ENCODE measurements at regions of chr9 and their contacts with region 1.

Region 1: DNA sequence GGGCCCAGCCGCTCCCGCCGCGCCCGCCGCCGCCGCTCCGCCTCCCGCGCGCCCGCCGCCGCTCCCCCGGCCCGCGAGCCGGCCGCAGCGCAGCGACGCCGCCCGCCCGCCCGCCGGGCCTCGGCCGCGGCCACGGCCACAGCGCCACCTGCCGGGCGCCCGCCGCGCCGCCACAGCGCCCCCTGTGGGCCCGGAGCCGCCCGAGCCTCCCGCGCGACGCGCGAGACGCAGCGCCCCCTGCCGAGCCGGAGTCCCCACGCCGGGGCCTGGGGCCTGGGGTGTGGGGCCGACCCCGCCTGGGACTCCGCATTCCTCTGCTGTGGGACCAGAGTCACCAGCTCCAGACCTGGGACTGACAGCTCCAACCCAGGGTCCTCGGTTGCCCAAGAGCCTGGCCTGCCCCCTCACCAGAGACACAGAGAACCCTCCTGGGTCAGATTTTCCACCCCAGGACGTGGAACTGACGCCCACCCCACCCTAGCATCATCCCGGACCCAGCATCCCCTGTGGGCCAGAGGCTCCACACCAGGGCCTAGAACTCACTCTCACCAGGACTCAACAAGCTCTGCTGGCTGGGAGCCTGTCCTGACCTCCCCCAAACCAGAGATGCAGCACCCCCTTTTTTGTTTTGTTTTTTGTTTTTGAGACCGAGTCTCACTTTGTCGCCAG is at the start of gene RAPGEF1:
- DNase-seq: peak; percentile 87
- ATAC-seq: peak; percentile 75
- H3K4me3 ChIP-seq: peak within 1 kb of the TSS; percentile 72 to 83 (median 77)
- H3K4me3 Mint-ChIP-seq: peak within 1 kb of the TSS; percentile 97
- H3K27ac ChIP-seq: peak within 1 kb of the TSS; percentile 44 to 80
- H3K27ac Mint-ChIP-seq: peak within 1 kb of the TSS; percentile 93
- H3K4me1 ChIP-seq: peaks cover 53 to 62% of the 10 kb centered on the region in 2 donors
- H3K4me1 Mint-ChIP-seq: peaks cover 64% of the 10 kb centered on the region
- H3K27me3 ChIP-seq: no peaks in the 10 kb centered on the region
- H3K27me3 Mint-ChIP-seq: no peaks in the 10 kb centered on the region
- CTCF ChIP-seq: peak; percentile 80
- total RNA-seq, gene RAPGEF1: 439 and 447 TPM in 2 replicates

Region 2: DNA sequence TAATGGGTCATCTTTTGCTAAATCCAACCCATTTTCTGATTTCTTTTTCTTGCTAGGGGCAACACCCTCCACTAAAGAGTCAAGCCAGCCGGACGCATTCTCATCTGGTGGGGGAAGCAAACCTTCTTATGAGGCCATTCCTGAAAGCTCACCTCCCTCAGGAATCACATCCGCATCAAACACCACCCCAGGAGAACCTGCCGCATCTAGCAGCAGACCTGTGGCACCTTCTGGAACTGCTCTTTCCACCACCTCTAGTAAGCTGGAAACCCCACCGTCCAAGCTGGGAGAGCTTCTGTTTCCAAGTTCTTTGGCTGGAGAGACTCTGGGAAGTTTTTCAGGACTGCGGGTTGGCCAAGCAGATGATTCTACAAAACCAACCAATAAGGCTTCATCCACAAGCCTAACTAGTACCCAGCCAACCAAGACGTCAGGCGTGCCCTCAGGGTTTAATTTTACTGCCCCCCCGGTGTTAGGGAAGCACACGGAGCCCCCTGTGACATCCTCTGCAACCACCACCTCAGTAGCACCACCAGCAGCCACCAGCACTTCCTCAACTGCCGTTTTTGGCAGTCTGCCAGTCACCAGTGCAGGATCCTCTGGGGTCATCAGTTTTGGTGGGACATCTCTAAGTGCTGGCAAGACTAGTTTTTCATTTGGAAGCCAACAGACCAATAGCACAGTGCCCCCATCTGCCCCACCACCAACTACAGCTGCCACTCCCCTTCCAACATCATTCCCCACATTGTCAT is 542.8 kb before region 1 on chr9:
- CTCF ChIA-PET with region 1: no interaction called
- POLR2A ChIA-PET with region 1: no interaction called
- intact Hi-C with region 1: no loop called
- DNase-seq: no peak
- ATAC-seq: no peak
- H3K4me3 ChIP-seq: no peak overlapping the region
- H3K4me3 Mint-ChIP-seq: no peak overlapping the region
- H3K27ac ChIP-seq: no peak overlapping the region
- H3K27ac Mint-ChIP-seq: no peak overlapping the region
- H3K4me1 ChIP-seq: no peaks in the 10 kb centered on the region
- H3K4me1 Mint-ChIP-seq: no peaks in the 10 kb centered on the region
- H3K27me3 ChIP-seq: no peaks in the 10 kb centered on the region
- H3K27me3 Mint-ChIP-seq: no peaks in the 10 kb centered on the region
- CTCF ChIP-seq: no peak

Region 3: DNA sequence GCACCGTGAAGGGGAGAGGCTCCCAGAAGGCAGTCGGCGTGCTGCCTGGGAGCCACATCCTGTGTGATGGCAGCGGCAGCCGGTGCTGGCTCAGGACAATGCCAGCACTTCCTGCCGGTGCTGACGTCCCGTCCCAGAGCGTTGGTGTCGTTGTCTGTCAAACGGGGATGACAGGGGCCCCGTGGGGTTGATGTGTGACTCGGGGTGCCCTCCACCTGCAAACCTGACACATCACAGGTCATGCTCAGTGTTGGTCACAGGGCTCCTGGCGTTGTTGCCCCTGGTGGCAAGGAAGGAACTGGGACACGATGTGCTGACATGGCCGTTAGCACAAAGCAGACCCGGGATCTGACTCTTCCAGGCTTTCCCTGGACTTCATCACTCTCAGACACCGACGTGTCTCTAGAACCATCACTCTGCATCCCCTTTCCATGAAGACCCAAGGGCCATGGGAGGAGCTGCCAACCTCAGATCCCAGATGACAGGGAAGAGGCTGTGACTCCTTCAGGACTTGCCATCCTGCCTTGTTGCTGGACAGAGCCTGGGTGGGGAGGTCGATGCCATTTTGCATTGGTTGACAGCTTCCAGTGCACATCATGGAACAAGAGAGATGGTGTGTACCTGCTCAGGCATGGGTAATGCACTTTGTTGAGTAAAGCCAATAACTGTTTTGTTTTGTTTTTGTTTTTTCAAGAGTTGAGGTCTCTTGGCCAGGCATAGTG is 429.1 kb before region 1 on chr9:
- CTCF ChIA-PET with region 1: no interaction called
- POLR2A ChIA-PET with region 1: no interaction called
- intact Hi-C with region 1: no loop called
- DNase-seq: peak; percentile 45
- ATAC-seq: peak; percentile 36
- H3K4me3 ChIP-seq: no peak overlapping the region
- H3K4me3 Mint-ChIP-seq: peak overlapping the region; percentile 41
- H3K27ac ChIP-seq: no peak overlapping the region
- H3K27ac Mint-ChIP-seq: no peak overlapping the region
- H3K4me1 ChIP-seq: peaks cover 5 to 7% of the 10 kb centered on the region in 2 donors
- H3K4me1 Mint-ChIP-seq: peaks cover 8% of the 10 kb centered on the region
- H3K27me3 ChIP-seq: peaks cover 0 to 6% (median 0%) of the 10 kb centered on the region in 4 experiments
- H3K27me3 Mint-ChIP-seq: peaks cover 8% of the 10 kb centered on the region
- CTCF ChIP-seq: no peak

Region 4: DNA sequence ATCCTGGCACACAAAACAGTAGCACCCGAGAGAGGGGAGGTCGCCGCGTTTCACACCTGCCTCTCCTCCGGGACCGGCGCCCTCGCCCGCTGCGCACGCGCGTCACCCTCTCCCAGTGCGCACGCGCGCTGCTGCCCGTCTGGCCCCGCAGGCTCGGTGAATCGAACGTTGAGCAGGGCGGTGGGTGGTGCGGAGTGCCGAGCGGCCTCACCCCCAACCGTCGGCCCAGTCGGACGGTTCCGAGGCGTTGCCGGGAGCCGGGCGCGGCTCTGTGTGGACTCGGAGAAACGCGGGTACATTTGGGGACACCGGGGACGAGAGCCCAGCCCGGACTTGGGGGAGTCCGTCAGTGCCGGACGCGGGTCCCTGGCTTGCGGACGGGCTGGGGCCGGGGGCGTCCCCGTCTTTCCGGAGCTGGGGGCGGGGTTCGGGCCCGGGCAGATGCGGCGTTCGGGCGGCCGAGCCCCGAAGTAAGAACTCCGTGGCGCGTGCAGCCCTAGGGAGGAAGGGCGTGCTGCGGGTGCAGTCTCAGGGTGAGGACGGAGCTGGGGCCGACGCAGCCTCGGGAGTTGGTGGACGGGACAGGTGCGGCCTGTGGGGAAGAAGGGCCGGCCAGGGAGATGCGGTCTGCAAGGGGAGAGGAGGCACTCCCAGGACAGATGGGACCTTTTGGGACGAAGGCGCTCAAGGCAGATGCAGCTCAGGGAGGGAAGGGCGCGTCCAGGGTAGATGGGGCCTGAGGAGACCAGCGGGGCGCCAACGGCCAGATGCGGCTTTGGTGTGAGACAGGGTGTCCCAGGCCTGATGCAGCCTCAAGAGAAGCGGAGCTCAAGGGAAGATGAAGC is 237.1 kb before region 1 on chr9 and contains the start of gene POMT1:
- CTCF ChIA-PET with region 1: interaction called, 5 read pairs
- POLR2A ChIA-PET with region 1: no interaction called
- intact Hi-C with region 1: loop called (anchors 10 kb)
- DNase-seq: peak; percentile 93
- ATAC-seq: peak; percentile 86
- H3K4me3 ChIP-seq: peak within 1 kb of the TSS; percentile 63 to 92 (median 86)
- H3K4me3 Mint-ChIP-seq: peak within 1 kb of the TSS; percentile 94
- H3K27ac ChIP-seq: peak within 1 kb of the TSS; percentile 27 to 70
- H3K27ac Mint-ChIP-seq: peak within 1 kb of the TSS; percentile 88
- H3K4me1 ChIP-seq: peaks cover 11 to 22% of the 10 kb centered on the region in 2 donors
- H3K4me1 Mint-ChIP-seq: peaks cover 24% of the 10 kb centered on the region
- H3K27me3 ChIP-seq: no peaks in the 10 kb centered on the region
- H3K27me3 Mint-ChIP-seq: no peaks in the 10 kb centered on the region
- CTCF ChIP-seq: no peak
- total RNA-seq, gene POMT1: 41.9 and 46.7 TPM in 2 replicates

Region 5: DNA sequence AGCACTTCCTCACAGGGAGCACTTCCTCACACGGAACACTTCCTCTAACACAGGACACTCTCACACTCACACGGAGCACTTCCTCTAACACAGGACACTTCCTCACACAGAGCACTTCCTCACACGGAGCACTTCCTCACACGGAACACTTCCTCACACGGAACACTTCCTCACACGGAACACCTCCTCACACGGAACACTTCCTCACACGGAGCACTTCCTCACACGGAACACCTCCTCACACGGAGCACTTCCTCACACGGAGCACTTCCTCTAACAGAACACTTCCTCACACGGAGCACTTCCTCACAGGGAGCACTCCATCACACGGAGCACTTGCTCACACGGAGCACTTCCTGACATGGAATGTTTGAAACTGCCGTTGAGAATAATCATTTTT is 224.0 kb before region 1 on chr9:
- CTCF ChIA-PET with region 1: no interaction called
- POLR2A ChIA-PET with region 1: no interaction called
- intact Hi-C with region 1: no loop called
- DNase-seq: no peak
- ATAC-seq: no peak
- H3K4me3 ChIP-seq: no peak overlapping the region
- H3K4me3 Mint-ChIP-seq: no peak overlapping the region
- H3K27ac ChIP-seq: peak overlapping the region; percentile 56 to 63
- H3K27ac Mint-ChIP-seq: no peak overlapping the region
- H3K4me1 ChIP-seq: peaks cover 0 to 18% of the 10 kb centered on the region in 2 donors
- H3K4me1 Mint-ChIP-seq: peaks cover 5% of the 10 kb centered on the region
- H3K27me3 ChIP-seq: no peaks in the 10 kb centered on the region
- H3K27me3 Mint-ChIP-seq: no peaks in the 10 kb centered on the region
- CTCF ChIP-seq: no peak

Region 6: GRCh38 chr9:131621551-131622358 is 118.4 kb before region 1 on chr9:
- CTCF ChIA-PET with region 1: interaction called, 88 read pairs
- POLR2A ChIA-PET with region 1: interaction called, 9 read pairs
- intact Hi-C with region 1: no loop called
- DNase-seq: peak; percentile 75
- ATAC-seq: peak; percentile 84
- H3K4me3 ChIP-seq: peak overlapping the region in 1 of 5 experiments; percentile 18
- H3K4me3 Mint-ChIP-seq: peak overlapping the region; percentile 85
- H3K27ac ChIP-seq: peak overlapping the region; percentile 65 to 81
- H3K27ac Mint-ChIP-seq: peak overlapping the region; percentile 81
- H3K4me1 ChIP-seq: peaks cover 25 to 37% of the 10 kb centered on the region in 2 donors
- H3K4me1 Mint-ChIP-seq: peaks cover 43% of the 10 kb centered on the region
- H3K27me3 ChIP-seq: no peaks in the 10 kb centered on the region
- H3K27me3 Mint-ChIP-seq: no peaks in the 10 kb centered on the region
- CTCF ChIP-seq: no peak

Region 7: DNA sequence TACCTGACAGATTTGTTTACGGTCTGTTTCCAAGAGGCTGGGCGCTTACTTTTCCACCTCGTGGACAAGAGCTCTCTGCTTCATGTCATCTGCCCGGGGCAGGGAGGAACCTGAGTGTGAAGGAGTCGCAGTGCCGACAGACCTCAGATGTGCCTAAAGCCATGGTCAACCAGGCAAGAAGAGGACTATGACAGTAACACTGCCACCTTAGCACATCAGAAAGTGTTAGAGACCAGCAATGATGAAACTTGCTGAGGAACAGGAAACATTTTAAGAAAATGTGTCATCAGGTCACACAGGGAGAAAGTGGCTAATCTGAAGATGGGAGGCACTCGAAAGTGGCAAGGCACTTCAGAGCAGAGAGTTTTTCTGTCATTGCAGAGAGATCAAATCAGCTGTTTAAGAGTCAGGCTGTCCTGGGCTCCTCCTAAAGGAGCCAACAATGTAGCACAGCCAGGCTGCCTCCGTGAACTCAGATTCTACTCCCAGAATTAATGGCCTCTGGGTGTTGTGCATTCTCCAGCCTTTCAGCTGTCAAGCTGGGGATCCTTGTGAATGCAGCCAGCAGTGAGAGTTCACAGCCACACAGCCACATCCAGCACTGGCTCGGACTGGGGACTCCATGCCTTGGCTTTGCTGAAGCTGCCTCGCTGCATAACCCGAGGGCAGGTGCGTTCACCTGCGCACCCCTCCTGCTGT is 94.9 kb before region 1 on chr9:
- CTCF ChIA-PET with region 1: interaction called, 30 read pairs
- POLR2A ChIA-PET with region 1: no interaction called
- intact Hi-C with region 1: no loop called
- DNase-seq: no peak
- ATAC-seq: no peak
- H3K4me3 ChIP-seq: no peak overlapping the region
- H3K4me3 Mint-ChIP-seq: peak overlapping the region; percentile 2
- H3K27ac ChIP-seq: peak overlapping the region in 1 of 2 donors; percentile 61
- H3K27ac Mint-ChIP-seq: peak overlapping the region; percentile 62
- H3K4me1 ChIP-seq: peaks cover 0 to 9% of the 10 kb centered on the region in 2 donors
- H3K4me1 Mint-ChIP-seq: peaks cover 41% of the 10 kb centered on the region
- H3K27me3 ChIP-seq: no peaks in the 10 kb centered on the region
- H3K27me3 Mint-ChIP-seq: no peaks in the 10 kb centered on the region
- CTCF ChIP-seq: no peak

Region 8: GRCh38 chr9:131727184-131727759 is 12.8 kb before region 1 on chr9:
- CTCF ChIA-PET with region 1: interaction called, 29 read pairs
- POLR2A ChIA-PET with region 1: interaction called, 7 read pairs
- intact Hi-C with region 1: loop called (anchors 1 kb)
- DNase-seq: no peak
- ATAC-seq: no peak
- H3K4me3 ChIP-seq: peak overlapping the region in 1 of 5 experiments; percentile 46
- H3K4me3 Mint-ChIP-seq: peak overlapping the region; percentile 89
- H3K27ac ChIP-seq: peak overlapping the region; percentile 99 to 100
- H3K27ac Mint-ChIP-seq: peak overlapping the region; percentile 91
- H3K4me1 ChIP-seq: peaks cover 88 to 97% of the 10 kb centered on the region in 2 donors
- H3K4me1 Mint-ChIP-seq: peaks cover 87% of the 10 kb centered on the region
- H3K27me3 ChIP-seq: no peaks in the 10 kb centered on the region
- H3K27me3 Mint-ChIP-seq: no peaks in the 10 kb centered on the region
- CTCF ChIP-seq: no peak